ENCODE measurements at regions of chr1 and their contacts with region 1.

Region 1: GRCh38 chr1:84525779-84526178 is 19.4 kb upstream of the GNG5 start:
- DNase-seq: no peak
- ATAC-seq: no peak
- H3K4me3 ChIP-seq: no peak overlapping the region
- H3K4me3 Mint-ChIP-seq: no peak overlapping the region
- H3K27ac ChIP-seq: no peak overlapping the region
- H3K27ac Mint-ChIP-seq: no peak overlapping the region
- H3K4me1 ChIP-seq: no peaks in the 10 kb centered on the region
- H3K4me1 Mint-ChIP-seq: no peaks in the 10 kb centered on the region
- H3K27me3 ChIP-seq: no peaks in the 10 kb centered on the region
- H3K27me3 Mint-ChIP-seq: no peaks in the 10 kb centered on the region
- CTCF ChIP-seq: no peak

Region 2: GRCh38 chr1:84020151-84020550 is 505.6 kb before region 1 on chr1:
- CTCF ChIA-PET with region 1: no interaction called
- POLR2A ChIA-PET with region 1: no interaction called
- intact Hi-C with region 1: no loop called
- DNase-seq: no peak
- ATAC-seq: no peak
- H3K4me3 ChIP-seq: no peak overlapping the region
- H3K4me3 Mint-ChIP-seq: no peak overlapping the region
- H3K27ac ChIP-seq: no peak overlapping the region
- H3K27ac Mint-ChIP-seq: no peak overlapping the region
- H3K4me1 ChIP-seq: no peaks in the 10 kb centered on the region
- H3K4me1 Mint-ChIP-seq: no peaks in the 10 kb centered on the region
- H3K27me3 ChIP-seq: no peaks in the 10 kb centered on the region
- H3K27me3 Mint-ChIP-seq: no peaks in the 10 kb centered on the region
- CTCF ChIP-seq: no peak

Region 3: GRCh38 chr1:84541679-84542078 is 15.9 kb after region 1 on chr1:
- CTCF ChIA-PET with region 1: no interaction called
- POLR2A ChIA-PET with region 1: no interaction called
- intact Hi-C with region 1: loop called in 1 of 2 experiments (anchors 2 kb)
- DNase-seq: peak in 2 of 9 experiments; percentile 3 to 19
- ATAC-seq: no peak
- H3K4me3 ChIP-seq: no peak overlapping the region
- H3K4me3 Mint-ChIP-seq: no peak overlapping the region
- H3K27ac ChIP-seq: no peak overlapping the region
- H3K27ac Mint-ChIP-seq: no peak overlapping the region
- H3K4me1 ChIP-seq: no peaks in the 10 kb centered on the region
- H3K4me1 Mint-ChIP-seq: no peaks in the 10 kb centered on the region
- H3K27me3 ChIP-seq: no peaks in the 10 kb centered on the region
- H3K27me3 Mint-ChIP-seq: no peaks in the 10 kb centered on the region
- CTCF ChIP-seq: no peak

Region 4: GRCh38 chr1:84668185-84668584 is 142.4 kb after region 1 on chr1:
- CTCF ChIA-PET with region 1: no interaction called
- POLR2A ChIA-PET with region 1: no interaction called
- intact Hi-C with region 1: no loop called
- DNase-seq: peak in 2 of 9 experiments; percentile 33 to 48
- ATAC-seq: peak; percentile 36
- H3K4me3 ChIP-seq: no peak overlapping the region
- H3K4me3 Mint-ChIP-seq: no peak overlapping the region
- H3K27ac ChIP-seq: no peak overlapping the region
- H3K27ac Mint-ChIP-seq: no peak overlapping the region
- H3K4me1 ChIP-seq: no peaks in the 10 kb centered on the region
- H3K4me1 Mint-ChIP-seq: peaks cover 9% of the 10 kb centered on the region
- H3K27me3 ChIP-seq: no peaks in the 10 kb centered on the region
- H3K27me3 Mint-ChIP-seq: no peaks in the 10 kb centered on the region
- CTCF ChIP-seq: no peak